Activated CD4-positive, alpha-beta memory T cell treated with anti-CD3 and anti-CD28 coated beads for 36 hours (primary cell): ENCODE measurements at regions of chr11 and their contacts with region 1.

Region 1: GRCh38 chr11:304915-305843 is 2.4 kb upstream of the IFITM2 start:
- DNase-seq: peak; percentile 76
- H3K4me3 Mint-ChIP-seq: no peak overlapping the region
- H3K27ac Mint-ChIP-seq: peak overlapping the region; percentile 5
- H3K4me1 Mint-ChIP-seq: peaks cover 38% of the 10 kb centered on the region
- H3K27me3 Mint-ChIP-seq: peaks cover 3% of the 10 kb centered on the region

Region 2: DNA sequence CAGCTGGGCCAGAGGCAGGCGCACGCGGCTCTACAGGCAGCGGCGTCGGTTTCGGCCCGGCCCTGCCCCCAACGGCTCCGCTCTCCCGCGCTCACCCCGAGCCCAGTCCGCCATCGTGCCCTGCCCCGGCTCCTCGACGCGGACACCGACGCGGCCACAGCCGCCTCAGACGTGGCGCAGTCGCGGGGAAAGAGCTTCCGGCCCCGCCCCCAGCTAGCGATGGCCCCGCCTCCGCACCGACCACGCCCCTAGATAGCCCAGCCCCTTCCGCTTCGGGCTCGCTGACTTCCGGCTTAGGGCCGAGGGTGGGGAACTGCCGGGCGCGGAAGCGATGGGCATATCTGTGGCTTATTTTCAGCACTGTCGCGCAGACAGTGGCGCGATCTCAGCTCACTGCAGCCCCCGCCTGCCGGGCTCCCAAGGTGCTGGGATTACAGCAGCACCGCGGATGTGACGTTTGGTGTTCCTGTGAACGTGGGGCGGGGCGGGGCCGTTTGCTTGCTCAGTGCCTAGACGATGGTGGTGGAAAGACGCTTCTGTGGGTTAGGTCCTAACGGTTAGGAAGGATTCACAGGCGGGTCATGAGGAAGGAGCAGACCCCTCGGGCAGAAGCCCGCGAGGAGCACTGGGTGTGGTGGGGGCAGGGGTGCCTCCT is 97.8 kb before region 1 on chr11 and contains the starts of genes BET1L and RIC8A:
- CTCF ChIA-PET with region 1: interaction called, 10 read pairs
- POLR2A ChIA-PET with region 1: no interaction called
- intact Hi-C with region 1: no loop called
- DNase-seq: peak; percentile 98
- H3K4me3 Mint-ChIP-seq: peak within 1 kb of the TSS; percentile 97
- H3K27ac Mint-ChIP-seq: peak within 1 kb of the TSS; percentile 99
- H3K4me1 Mint-ChIP-seq: peaks cover 55% of the 10 kb centered on the region
- H3K27me3 Mint-ChIP-seq: no peaks in the 10 kb centered on the region
- total RNA-seq, gene BET1L: 51.0 to 53.2 TPM
- total RNA-seq, gene RIC8A: 100 to 104 TPM

Region 3: GRCh38 chr11:250740-251299 is 54.4 kb before region 1 on chr11:
- CTCF ChIA-PET with region 1: interaction called, 30 read pairs
- POLR2A ChIA-PET with region 1: no interaction called
- intact Hi-C with region 1: loop called (anchors 5 kb)
- DNase-seq: peak; percentile 89
- H3K4me3 Mint-ChIP-seq: no peak overlapping the region
- H3K27ac Mint-ChIP-seq: peak overlapping the region; percentile 64
- H3K4me1 Mint-ChIP-seq: peaks cover 21% of the 10 kb centered on the region
- H3K27me3 Mint-ChIP-seq: no peaks in the 10 kb centered on the region

Region 4: GRCh38 chr11:288328-289144 is 16.6 kb before region 1 on chr11 and contains the start of gene PGGHG:
- CTCF ChIA-PET with region 1: interaction called, 6 read pairs
- POLR2A ChIA-PET with region 1: no interaction called
- intact Hi-C with region 1: loop called (anchors 2 kb)
- DNase-seq: peak; percentile 61
- H3K4me3 Mint-ChIP-seq: peak within 1 kb of the TSS; percentile 96
- H3K27ac Mint-ChIP-seq: peak within 1 kb of the TSS; percentile 95
- H3K4me1 Mint-ChIP-seq: peaks cover 27% of the 10 kb centered on the region
- H3K27me3 Mint-ChIP-seq: no peaks in the 10 kb centered on the region
- total RNA-seq, gene PGGHG: 74.3 to 75.0 TPM

Region 5: DNA sequence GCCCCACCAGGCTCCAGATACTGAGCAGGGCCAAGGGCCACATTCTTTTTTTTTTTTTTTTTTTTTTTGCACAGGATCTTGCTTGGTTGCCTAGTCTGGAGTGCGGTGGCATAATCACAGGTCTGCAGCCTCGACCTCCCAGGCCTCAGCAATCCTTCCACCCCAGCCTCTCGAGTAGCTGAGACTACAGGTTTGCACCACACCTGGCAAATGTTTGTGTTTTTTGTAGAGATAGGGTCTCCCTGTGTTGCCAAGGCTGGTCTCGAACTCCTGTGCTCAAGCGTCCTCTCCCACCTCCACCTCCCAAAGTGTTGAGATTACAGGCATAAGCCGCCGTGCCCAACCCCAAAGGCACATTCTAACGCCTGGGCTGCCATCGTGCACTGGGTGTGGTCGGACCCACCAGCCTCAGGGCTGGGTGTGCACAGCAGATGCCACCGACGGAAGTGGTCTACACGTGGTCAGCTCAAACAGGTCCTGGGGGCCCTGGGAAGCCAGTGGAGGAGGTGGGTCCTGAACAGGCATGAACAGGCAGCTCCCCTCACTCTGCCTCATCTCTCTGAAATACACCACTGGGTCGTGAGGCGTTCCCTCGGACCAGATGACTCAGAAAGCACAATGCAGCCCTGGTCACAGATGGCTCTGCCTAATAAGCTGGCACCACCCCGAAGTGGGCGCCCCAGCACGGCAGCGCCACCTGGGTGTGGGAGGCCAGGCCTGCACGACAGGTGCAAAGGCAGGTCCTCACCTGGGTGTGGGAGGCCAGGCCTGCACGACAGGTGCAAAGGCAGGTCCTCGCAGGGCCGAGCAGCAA is 59.0 kb after region 1 on chr11:
- CTCF ChIA-PET with region 1: interaction called, 46 read pairs
- POLR2A ChIA-PET with region 1: no interaction called
- intact Hi-C with region 1: no loop called
- DNase-seq: peak; percentile 69
- H3K4me3 Mint-ChIP-seq: no peak overlapping the region
- H3K27ac Mint-ChIP-seq: no peak overlapping the region
- H3K4me1 Mint-ChIP-seq: peaks cover 8% of the 10 kb centered on the region
- H3K27me3 Mint-ChIP-seq: peaks cover 24% of the 10 kb centered on the region